Mammary epithelial cell (primary cell): ENCODE measurements at regions of chr4 and their contacts with region 1.

Region 1: GRCh38 chr4:69524706-69525105 is 29.0 kb upstream of the UGT2B4 start:
- DNase-seq: no peak
- H3K4me3 ChIP-seq: no peak overlapping the region
- H3K27ac ChIP-seq: no peak overlapping the region
- H3K4me1 ChIP-seq: no peaks in the 10 kb centered on the region
- H3K27me3 ChIP-seq: no peaks in the 10 kb centered on the region
- CTCF ChIP-seq: no peak

Region 2: GRCh38 chr4:69377562-69377961 is 147.1 kb before region 1 on chr4:
- CTCF ChIA-PET with region 1: no interaction called
- dilution Hi-C with region 1: no loop called
- in situ Hi-C with region 1: no loop called
- intact Hi-C with region 1: no loop called
- DNase-seq: no peak
- H3K4me3 ChIP-seq: no peak overlapping the region
- H3K27ac ChIP-seq: no peak overlapping the region
- H3K4me1 ChIP-seq: no peaks in the 10 kb centered on the region
- H3K27me3 ChIP-seq: no peaks in the 10 kb centered on the region
- CTCF ChIP-seq: no peak

Region 3: DNA sequence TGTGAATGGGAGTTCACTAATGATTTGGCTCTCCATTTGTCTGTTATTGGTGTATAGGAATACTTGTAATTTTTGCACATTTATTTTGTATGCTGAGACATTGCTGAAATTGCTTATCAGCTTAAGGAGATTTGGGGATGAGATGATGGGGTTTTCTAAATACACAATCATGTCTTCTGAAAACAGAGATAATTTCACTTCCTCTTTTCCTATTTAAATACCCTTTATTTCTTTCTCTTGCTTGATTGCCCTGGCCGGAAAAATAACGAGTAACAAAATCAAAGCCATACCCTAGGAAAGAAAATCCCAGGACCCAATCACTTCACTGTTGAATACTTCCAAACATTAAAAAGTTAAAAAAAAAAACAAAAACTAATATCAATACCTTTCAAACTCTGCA is 38.7 kb after region 1 on chr4:
- CTCF ChIA-PET with region 1: no interaction called
- dilution Hi-C with region 1: loop called (anchors 5 kb)
- in situ Hi-C with region 1: no loop called
- intact Hi-C with region 1: no loop called
- DNase-seq: no peak
- H3K4me3 ChIP-seq: no peak overlapping the region
- H3K27ac ChIP-seq: no peak overlapping the region
- H3K4me1 ChIP-seq: no peaks in the 10 kb centered on the region
- H3K27me3 ChIP-seq: no peaks in the 10 kb centered on the region
- CTCF ChIP-seq: no peak

Region 4: DNA sequence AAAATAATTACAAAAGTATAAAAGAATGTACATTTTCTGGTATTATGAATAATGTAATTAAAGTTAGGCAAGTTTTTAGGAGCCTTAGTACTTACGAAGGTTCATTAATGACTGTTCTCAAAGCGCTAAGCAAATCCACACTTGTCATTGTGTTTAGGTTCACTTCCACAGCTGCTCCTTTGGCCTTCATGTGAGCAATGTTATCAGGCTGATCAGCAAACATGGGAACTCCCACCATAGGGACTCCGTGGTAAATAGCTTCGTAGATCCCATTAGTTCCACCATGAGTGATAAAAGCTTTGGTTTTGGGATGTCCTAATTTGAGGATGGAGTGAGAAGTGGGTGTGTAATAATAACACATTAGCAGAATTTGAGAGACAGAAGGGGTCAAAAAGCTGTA is 69.7 kb after region 1 on chr4:
- CTCF ChIA-PET with region 1: no interaction called
- dilution Hi-C with region 1: no loop called
- in situ Hi-C with region 1: no loop called
- intact Hi-C with region 1: no loop called
- DNase-seq: no peak
- H3K4me3 ChIP-seq: no peak overlapping the region
- H3K27ac ChIP-seq: no peak overlapping the region
- H3K4me1 ChIP-seq: no peaks in the 10 kb centered on the region
- H3K27me3 ChIP-seq: no peaks in the 10 kb centered on the region
- CTCF ChIP-seq: no peak

Region 5: GRCh38 chr4:69881173-69881773 is 356.6 kb after region 1 on chr4:
- CTCF ChIA-PET with region 1: no interaction called
- dilution Hi-C with region 1: no loop called
- in situ Hi-C with region 1: no loop called
- intact Hi-C with region 1: no loop called
- DNase-seq: peak; percentile 27
- H3K4me3 ChIP-seq: no peak overlapping the region
- H3K27ac ChIP-seq: no peak overlapping the region
- H3K4me1 ChIP-seq: no peaks in the 10 kb centered on the region
- H3K27me3 ChIP-seq: no peaks in the 10 kb centered on the region
- CTCF ChIP-seq: peak; percentile 92 to 93